ENCODE measurements at regions of chr1 and their contacts with region 1.

Region 1: GRCh38 chr1:17370618-17371017 is 1.4 kb upstream of the PADI6 start:
- DNase-seq: no peak
- H3K4me3 ChIP-seq: no peak overlapping the region
- H3K27ac ChIP-seq: no peak overlapping the region
- H3K4me1 ChIP-seq: no peaks in the 10 kb centered on the region
- H3K27me3 ChIP-seq: peaks cover 0 to 58% (median 0%) of the 10 kb centered on the region in 3 donors
- CTCF ChIP-seq: no peak
- EP300 ChIP-seq: no peak
- POLR2A ChIP-seq: no peak

Region 2: DNA sequence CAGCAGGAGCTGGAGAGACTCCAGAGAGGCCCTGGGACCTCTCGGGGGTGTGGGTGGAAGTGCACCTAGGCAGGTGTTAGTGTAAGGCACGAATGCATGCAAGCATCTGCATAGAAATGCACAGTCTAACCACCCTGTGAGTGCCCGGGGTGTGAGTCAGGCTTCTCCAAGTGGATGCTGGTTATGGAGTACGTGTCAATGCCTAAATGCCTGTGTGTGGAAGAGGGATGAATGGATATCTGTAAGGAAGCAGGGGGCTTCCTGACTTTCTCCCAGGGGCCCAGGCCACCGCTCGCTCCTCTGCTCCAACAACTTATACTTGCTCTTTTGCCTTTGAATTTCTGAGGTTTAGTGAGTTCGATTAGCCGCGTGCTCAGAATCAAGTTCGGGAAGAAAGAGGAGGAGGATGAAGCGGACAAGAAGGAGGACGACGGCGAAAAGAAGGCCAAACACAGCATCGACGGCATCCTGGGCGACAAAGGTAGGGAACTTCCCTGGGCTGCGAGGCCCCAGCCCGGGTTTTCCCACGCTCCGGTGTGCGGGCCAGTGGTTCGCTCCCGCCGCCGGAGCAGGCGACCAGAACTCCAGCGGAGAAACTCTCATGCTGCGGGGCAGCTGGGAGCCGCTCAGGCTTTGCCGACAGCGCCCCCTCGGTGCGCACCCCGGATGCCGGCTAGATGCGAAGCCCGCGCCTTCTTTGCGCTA is 1265.4 kb after region 1 on chr1:
- intact Hi-C with region 1: loop called (anchors 10 kb)
- DNase-seq: peak in 1 of 2 donors; percentile 37
- H3K4me3 ChIP-seq: no peak overlapping the region
- H3K27ac ChIP-seq: no peak overlapping the region
- H3K4me1 ChIP-seq: peaks cover 0 to 46% (median 19%) of the 10 kb centered on the region in 4 donors
- H3K27me3 ChIP-seq: peaks cover 77 to 100% (median 99%) of the 10 kb centered on the region in 3 donors
- CTCF ChIP-seq: no peak
- EP300 ChIP-seq: no peak
- POLR2A ChIP-seq: no peak

Measured in stomach (tissue), 19 donors.